GM12878 (cell line): ENCODE measurements at regions of chr1 and their contacts with region 1.

Region 1: GRCh38 chr1:35268282-35269200 is at the start of gene ZMYM4:
- DNase-seq: peak; percentile 81
- ATAC-seq: peak; percentile 97
- H3K4me3 ChIP-seq: peak within 1 kb of the TSS; percentile 87
- H3K27ac ChIP-seq: peak within 1 kb of the TSS; percentile 85
- H3K4me1 ChIP-seq: peaks cover 3% of the 10 kb centered on the region; the same call in 1 of the 2 replicates
- H3K27me3 ChIP-seq: no peaks in the 10 kb centered on the region
- CTCF ChIP-seq: 0 out of 6 replicates have a peak, but pooled peaks of 1 of the 3 experiments have one; percentile 5
- EP300 ChIP-seq: no peak
- POLR2A ChIP-seq: peak; percentile 90
- RAD21 ChIP-seq: no peak
- polyA plus RNA-seq, gene ZMYM4: 8.0 to 8.5 TPM

Region 2: GRCh38 chr1:35192853-35193664 is 75.5 kb before region 1 on chr1 and contains the start of gene SFPQ:
- CTCF ChIA-PET with region 1: no interaction called
- POLR2A ChIA-PET with region 1: interaction called, 6 read pairs
- RAD21 ChIA-PET with region 1: no interaction called
- SMC1A ChIA-PET with region 1: no interaction called
- in situ Hi-C with region 1: no loop called
- intact Hi-C with region 1: loop called (anchors 5 kb)
- DNase-seq: peak; percentile 97
- ATAC-seq: peak; percentile 93
- H3K4me3 ChIP-seq: peak within 1 kb of the TSS; percentile 80
- H3K27ac ChIP-seq: peak within 1 kb of the TSS; percentile 94
- H3K4me1 ChIP-seq: no peaks in the 10 kb centered on the region
- H3K27me3 ChIP-seq: no peaks in the 10 kb centered on the region
- CTCF ChIP-seq: no peak
- EP300 ChIP-seq: no peak
- POLR2A ChIP-seq: peak; percentile 98
- RAD21 ChIP-seq: no peak
- polyA plus RNA-seq, gene SFPQ: 78.5 to 117 TPM

Region 3: DNA sequence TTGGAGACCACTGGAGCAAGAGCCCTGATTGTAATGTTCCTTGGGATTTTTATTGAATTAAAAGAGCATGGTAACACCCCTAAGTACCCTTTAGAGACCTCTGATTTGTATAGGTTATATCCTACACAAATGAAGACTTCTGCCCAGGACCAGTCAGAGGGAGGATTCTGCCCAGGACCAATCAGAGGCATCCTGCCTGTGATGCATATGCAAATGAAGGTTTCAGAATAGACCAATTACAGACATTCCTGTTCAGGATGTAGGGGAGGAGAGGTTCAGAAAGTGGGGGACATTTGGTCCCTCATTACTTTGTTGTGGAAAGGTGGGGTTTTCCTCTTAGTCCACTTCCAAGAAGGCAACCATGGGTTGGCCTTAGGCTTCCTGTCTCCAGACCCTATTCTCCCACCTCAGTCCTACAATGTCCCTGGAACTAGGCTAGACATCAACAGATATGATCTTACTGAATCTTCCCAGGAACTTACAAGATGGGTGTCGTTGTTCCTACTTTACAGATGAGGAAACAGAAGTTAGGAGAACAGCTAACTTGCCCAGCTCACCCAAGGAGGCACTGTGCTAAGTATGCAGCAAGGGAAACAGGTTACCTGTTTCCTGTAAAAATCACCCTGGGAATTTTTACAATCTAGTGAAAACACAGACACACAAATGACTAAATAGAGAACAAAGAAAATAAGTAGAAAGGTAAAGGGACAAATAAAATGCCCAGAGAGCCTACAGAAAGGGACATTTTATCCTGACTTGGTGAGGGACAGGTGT is 38.8 kb before region 1 on chr1:
- CTCF ChIA-PET with region 1: interaction called, 3 read pairs
- POLR2A ChIA-PET with region 1: no interaction called
- RAD21 ChIA-PET with region 1: interaction called, 3 read pairs
- SMC1A ChIA-PET with region 1: no interaction called
- in situ Hi-C with region 1: no loop called
- intact Hi-C with region 1: loop called (anchors 5 kb)
- DNase-seq: no peak
- ATAC-seq: peak; percentile 51
- H3K4me3 ChIP-seq: no peak overlapping the region
- H3K27ac ChIP-seq: peak overlapping the region; percentile 60
- H3K4me1 ChIP-seq: peaks cover 5% of the 10 kb centered on the region; the same call in 1 of the 2 replicates
- H3K27me3 ChIP-seq: no peaks in the 10 kb centered on the region
- CTCF ChIP-seq: no peak
- EP300 ChIP-seq: no peak
- POLR2A ChIP-seq: no peak
- RAD21 ChIP-seq: no peak